Spleen (tissue), 13 donors: ENCODE measurements at regions of chr15 and their contacts with region 1.

Region 1: GRCh38 chr15:66497502-66498455 is at the start of gene SNAPC5:
- DNase-seq: peak; percentile 100
- H3K4me3 ChIP-seq: peak within 1 kb of the TSS; percentile 84 to 98 (median 91)
- H3K27ac ChIP-seq: peak within 1 kb of the TSS; percentile 82 to 95 (median 92)
- H3K4me1 ChIP-seq: peaks cover 18 to 86% (median 60%) of the 10 kb centered on the region in 6 donors
- H3K27me3 ChIP-seq: no peaks in the 10 kb centered on the region
- CTCF ChIP-seq: peak; percentile 93 to 99 (median 97)
- POLR2A ChIP-seq: peak in 1 of 3 donors; percentile 37
- total RNA-seq, gene SNAPC5: 20.0 to 37.2 (median 25.2) TPM

Region 2: GRCh38 chr15:65833501-65834205 is 664.1 kb before region 1 on chr15:
- intact Hi-C with region 1: no loop called
- DNase-seq: no peak
- H3K4me3 ChIP-seq: peak overlapping the region in 1 of 8 donors; percentile 51
- H3K27ac ChIP-seq: peak overlapping the region; percentile 49 to 94 (median 92)
- H3K4me1 ChIP-seq: peaks cover 19 to 81% (median 46%) of the 10 kb centered on the region in 6 donors
- H3K27me3 ChIP-seq: no peaks in the 10 kb centered on the region
- CTCF ChIP-seq: no peak
- POLR2A ChIP-seq: no peak

Region 3: DNA sequence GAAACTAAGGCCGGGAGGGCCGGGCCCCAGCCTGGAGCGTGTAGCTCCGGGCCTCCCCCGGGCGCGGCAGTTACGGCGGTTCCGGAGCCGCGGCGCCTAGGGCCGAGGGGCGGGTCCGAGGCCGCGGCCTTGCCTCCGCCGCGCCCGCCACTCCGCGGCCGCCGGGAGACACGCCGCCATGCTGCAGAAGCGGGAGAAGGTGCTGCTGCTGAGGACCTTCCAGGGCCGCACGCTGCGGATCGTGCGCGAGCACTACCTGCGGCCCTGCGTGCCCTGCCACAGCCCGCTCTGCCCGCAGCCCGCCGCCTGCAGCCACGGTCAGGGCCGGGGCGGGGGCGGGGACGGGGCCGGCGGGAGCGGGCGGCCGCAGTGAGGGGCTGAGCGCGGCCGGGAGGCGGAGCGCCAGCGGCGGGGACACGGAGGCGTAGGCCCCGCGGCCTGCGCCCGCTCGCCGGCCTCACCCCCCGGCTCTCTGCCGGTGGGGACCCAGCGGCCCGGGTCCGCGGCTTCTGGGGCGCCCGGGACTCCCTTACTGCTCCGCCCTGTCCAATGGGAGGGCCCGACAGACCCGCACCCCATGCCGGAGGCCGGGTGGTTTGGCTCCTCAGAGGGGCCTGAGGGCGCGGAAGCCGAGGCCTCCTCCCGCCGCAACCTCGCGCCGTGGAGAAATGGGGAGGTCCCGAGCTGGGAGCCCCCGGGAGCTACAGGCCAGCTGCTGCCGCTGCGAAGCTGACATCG is 204.2 kb before region 1 on chr15 and contains the start of gene DIS3L:
- intact Hi-C with region 1: loop called (anchors 5 kb)
- DNase-seq: peak; percentile 93
- H3K4me3 ChIP-seq: peak within 1 kb of the TSS; percentile 58 to 88 (median 77)
- H3K27ac ChIP-seq: peak within 1 kb of the TSS; percentile 81 to 96 (median 91)
- H3K4me1 ChIP-seq: peaks cover 12 to 68% (median 41%) of the 10 kb centered on the region in 6 donors
- H3K27me3 ChIP-seq: no peaks in the 10 kb centered on the region
- CTCF ChIP-seq: peak in 1 of 11 experiments; percentile 5
- POLR2A ChIP-seq: peak in 1 of 3 donors; percentile 42
- total RNA-seq, gene DIS3L: 23.1 to 30.7 (median 28.1) TPM

Region 4: DNA sequence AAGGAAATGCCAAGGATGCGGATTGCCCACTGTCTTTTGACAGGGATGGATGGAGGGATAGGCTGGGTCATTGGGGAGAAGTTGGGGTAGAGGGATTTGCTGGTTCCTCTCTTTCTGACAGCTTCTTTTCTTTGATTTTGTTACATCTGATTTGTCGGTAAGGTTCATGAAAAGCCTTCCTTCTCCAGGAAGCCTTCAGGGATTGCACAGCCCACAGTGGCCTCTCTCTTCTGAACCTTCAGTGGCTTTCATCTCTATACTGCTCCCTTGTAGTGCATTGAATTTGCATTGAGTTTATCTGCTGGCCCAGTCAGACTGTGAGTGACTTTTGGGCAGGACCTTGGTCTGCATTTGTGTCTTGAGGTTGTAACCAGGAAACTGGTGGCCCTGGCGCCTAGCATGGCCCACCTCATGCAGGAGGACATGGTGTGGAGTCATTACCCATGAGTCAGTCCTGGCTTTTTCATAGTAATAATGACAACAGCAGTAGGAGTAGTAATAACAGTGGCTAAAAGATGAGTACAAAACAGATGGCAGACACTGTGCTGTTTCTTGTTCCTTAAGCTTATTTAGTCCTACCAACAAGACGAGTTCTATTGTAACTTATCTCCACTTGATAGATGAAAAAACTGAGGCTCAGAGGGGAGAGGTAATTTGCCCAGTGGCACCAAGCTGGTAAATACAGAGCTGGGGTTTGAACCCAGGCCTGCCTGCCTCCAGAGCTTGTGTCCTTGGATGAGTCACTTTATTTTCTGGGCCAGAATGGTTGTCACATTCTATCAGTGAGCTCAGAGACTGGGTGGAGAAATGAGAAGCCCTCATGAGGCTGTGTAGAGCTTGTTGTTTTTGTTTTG is 232.6 kb after region 1 on chr15:
- intact Hi-C with region 1: no loop called
- DNase-seq: no peak
- H3K4me3 ChIP-seq: no peak overlapping the region
- H3K27ac ChIP-seq: peak overlapping the region in 1 of 8 donors; percentile 46
- H3K4me1 ChIP-seq: peaks cover 0 to 7% (median 0%) of the 10 kb centered on the region in 6 donors
- H3K27me3 ChIP-seq: no peaks in the 10 kb centered on the region
- CTCF ChIP-seq: no peak
- POLR2A ChIP-seq: no peak